Left ventricle myocardium superior (tissue), 1 donor: ENCODE measurements at regions of chr6 and their contacts with region 1.

Region 1: DNA sequence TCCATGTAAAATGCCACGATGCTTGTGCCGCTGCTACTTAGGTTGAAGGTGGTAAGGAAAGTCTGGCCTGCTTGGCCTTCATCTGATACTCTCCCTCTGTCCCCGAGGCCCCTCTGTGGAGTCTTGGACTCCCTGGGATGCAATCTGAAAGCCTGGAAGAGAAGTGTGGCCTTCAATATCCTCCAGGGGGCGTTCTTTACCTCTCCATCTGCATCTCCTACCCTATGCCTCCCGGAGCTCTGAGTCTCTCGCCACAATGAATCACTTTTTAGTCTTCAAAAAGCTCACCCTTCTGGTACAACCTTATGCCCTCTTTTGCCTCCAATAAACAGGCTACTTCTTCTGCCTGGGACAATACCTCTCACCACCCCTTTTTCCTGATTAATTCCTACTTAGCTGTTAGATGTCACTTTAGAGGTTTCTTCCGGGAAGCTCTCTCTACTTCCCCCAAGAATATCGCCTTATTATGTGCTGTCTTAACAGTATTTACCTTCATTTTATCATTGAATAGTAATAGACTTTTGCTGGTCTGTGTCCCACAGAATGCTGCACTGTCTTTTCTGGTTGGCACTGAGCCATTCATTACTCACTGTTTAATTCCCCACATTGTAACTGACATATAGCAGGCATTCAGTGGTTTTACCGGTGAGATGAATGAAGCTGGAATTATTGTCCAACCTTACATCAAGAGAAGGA is 13.9 kb upstream of the ATG5 start:
- DNase-seq: no peak
- ATAC-seq: peak; percentile 87

Region 2: DNA sequence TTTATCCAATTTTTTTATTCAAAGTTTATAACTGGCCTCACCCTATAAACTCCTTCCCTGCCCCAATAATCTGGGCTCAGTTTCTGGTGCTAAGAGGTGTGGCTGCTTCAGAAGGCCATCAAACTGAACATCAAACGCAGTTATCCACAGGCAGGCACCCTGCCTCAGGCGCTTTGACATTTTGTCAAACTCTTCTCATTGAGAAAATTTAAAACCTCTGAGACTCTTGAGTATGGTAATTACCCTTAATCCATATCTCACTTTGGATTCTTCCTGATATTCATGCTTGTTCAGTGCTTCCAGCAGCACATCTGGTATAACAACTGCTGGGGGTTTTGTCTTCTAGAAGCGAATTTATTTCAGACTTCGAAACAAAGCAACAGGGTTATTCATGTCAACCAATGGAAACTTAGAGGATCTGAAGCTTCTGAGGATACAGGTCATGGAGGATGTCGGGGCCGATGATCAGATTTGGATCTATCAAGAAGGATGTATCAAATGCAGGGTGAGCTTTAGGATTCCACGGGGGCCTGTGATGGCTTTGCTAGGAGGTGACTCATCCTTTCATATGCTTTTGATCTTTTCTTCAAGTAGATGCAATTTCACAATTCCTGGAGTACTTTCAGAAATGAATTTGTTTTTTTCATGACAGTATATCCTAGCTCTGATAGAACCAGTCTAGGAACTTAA is 221.7 kb after region 1 on chr6:
- intact Hi-C with region 1: loop called (anchors 10 kb)
- DNase-seq: no peak
- ATAC-seq: no peak